Common myeloid progenitor, CD34-positive (primary cell): ENCODE measurements at regions of chr1 and their contacts with region 1.

Region 1: DNA sequence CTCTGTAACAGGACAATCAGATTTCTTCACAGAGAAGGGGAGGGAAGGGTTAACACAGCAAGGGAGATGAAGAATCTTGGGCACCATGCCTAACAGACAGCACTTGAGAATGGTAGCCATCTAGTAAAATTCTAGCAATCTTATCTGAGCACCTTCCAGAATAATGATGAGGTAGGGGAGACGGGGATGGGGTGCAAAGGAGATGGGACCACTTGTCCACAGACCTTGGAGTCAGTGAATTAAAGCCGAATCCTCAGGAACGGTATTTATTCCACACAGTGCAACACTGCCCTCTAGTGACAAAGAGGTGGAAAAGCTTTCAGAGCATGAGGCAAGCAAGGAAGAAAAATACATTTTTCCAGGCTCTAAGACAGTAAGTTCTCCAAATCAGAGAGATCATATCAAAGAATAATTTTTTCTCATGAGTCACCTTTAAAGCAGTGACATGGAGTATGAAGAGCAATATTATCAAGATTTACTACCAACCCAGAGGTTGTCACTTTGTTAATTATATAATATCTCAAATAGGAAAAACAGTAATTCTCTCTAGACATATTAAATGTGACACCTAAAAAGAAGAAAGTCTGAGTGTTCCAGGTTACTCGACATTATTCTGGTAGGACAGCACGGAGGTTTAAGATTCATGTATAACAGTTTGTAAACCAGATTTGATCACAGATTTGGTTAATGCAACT is 43.3 kb upstream of the LPAR3 start:
- DNase-seq: peak; percentile 62 to 83 (median 80)
- H3K4me3 ChIP-seq: no peak overlapping the region
- H3K27ac ChIP-seq: no peak overlapping the region
- H3K4me1 ChIP-seq: no peaks in the 10 kb centered on the region
- H3K27me3 ChIP-seq: no peaks in the 10 kb centered on the region

Region 2: DNA sequence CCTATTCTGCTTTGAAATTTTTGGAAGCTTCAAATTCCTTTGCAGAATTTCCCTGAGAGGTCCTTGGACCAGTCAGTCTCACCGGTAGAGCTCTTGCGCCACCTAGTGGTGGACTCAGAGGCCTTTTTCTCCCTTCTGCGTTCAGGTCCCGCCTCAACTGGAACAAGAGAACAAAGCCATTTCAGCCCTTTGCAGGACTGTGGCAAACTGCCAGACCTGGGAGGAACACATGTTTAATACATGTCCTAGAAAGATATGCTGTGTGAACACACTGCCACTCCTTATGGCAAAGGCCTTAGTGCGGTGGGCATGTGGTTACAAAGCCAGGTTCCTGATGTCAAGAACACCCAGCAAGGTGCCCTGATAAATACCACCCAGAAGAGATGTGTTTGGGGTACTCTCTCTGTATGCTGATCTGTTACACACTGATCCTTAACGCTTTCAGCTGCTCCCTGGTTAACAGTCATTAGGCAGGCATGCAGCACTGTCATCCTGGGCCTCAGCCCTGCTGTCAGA is 163.8 kb before region 1 on chr1:
- CTCF ChIA-PET with region 1: interaction called, 18 read pairs
- POLR2A ChIA-PET with region 1: no interaction called
- DNase-seq: peak; percentile 79 to 87 (median 80)
- H3K4me3 ChIP-seq: no peak overlapping the region
- H3K27ac ChIP-seq: no peak overlapping the region
- H3K4me1 ChIP-seq: no peaks in the 10 kb centered on the region
- H3K27me3 ChIP-seq: no peaks in the 10 kb centered on the region

Region 3: DNA sequence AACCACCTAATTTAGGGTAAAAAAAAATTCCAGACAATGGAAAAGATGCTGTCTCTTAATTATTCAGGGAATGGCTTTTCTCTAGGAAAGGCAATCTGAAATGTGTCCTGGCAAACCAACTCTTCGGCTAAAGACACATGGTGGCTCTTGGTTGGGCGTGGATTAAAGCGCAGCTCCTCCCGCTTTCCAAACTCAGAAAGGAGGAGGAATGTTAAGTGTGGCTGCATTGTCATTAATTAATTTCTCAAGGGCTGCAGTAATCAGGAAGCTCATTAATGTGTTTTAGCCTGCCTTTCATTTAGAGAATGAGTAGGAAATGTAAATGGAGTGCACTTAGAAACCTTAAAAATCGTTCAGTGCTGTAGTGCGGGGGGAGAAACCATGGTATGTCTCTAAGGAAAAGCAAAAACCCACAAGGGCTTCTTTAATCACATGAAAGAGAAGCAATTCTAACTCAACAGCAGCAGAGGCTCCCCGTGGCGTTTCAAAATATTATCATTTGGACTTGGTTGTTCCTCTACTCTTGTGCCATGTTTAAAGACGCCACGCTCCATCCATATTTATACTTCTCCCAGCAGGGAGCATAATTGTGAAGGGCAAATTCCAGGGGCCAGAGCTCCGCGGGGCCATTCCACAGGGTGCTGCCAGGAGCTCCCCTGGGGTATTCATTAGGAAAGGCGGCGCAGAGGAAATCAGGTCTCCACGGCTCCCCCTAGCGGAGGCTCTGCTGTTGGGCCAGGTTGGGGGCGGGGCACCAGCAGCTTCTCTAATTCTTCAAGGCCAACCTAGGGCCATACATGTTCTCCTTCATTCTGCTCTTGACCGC is 154.1 kb before region 1 on chr1:
- CTCF ChIA-PET with region 1: interaction called, 10 read pairs
- POLR2A ChIA-PET with region 1: no interaction called
- DNase-seq: peak; percentile 57 to 77 (median 68)
- H3K4me3 ChIP-seq: peak overlapping the region in 1 of 7 experiments; percentile 17
- H3K27ac ChIP-seq: no peak overlapping the region
- H3K4me1 ChIP-seq: peaks cover 5 to 34% (median 17%) of the 10 kb centered on the region in 4 experiments
- H3K27me3 ChIP-seq: no peaks in the 10 kb centered on the region

Region 4: GRCh38 chr1:84923317-84923716 is 12.9 kb before region 1 on chr1:
- CTCF ChIA-PET with region 1: interaction called, 16 read pairs
- POLR2A ChIA-PET with region 1: no interaction called
- DNase-seq: no peak
- H3K4me3 ChIP-seq: no peak overlapping the region
- H3K27ac ChIP-seq: no peak overlapping the region
- H3K4me1 ChIP-seq: no peaks in the 10 kb centered on the region
- H3K27me3 ChIP-seq: no peaks in the 10 kb centered on the region